ENCODE measurements at regions of chr14 and their contacts with region 1.

Region 1: GRCh38 chr14:22955702-22956569 is 954 bp downstream of the HAUS4 start:
- H3K4me3 ChIP-seq: peak overlapping the region; percentile 75
- H3K27ac ChIP-seq: peak overlapping the region; percentile 76; the same call in 1 of the 2 replicates
- H3K4me1 ChIP-seq: no peaks in the 10 kb centered on the region
- CTCF ChIP-seq: no peak

Region 2: DNA sequence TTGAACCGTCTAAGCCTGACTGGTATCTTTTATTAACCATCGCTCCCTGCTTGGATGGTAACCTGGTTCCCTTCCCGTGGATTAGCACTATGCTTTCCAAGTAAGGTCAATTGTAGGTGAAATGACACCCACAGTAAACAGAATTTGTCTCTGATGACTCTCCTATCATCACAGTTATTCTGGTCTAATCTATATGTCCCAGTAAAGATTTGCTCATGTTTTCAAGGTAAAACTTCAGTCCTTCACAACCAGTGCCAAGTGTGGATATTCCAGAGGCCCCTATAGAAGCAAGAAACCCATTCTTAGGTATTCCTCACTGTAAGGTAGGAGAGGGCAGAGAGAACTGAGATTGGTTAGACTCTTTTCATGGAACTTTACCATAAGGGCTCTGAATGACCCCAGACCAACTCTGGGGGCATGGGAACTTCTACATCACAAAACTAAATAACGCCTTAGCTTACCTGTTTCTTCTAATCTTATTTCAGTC is 10.9 kb after region 1 on chr14:
- CTCF ChIA-PET with region 1: interaction called, 43 read pairs
- POLR2A ChIA-PET with region 1: interaction called, 17 read pairs
- H3K4me3 ChIP-seq: no peak overlapping the region
- H3K27ac ChIP-seq: no peak overlapping the region
- H3K4me1 ChIP-seq: peaks cover 5% of the 10 kb centered on the region; the same call in 1 of the 2 replicates
- CTCF ChIP-seq: no peak

Region 3: DNA sequence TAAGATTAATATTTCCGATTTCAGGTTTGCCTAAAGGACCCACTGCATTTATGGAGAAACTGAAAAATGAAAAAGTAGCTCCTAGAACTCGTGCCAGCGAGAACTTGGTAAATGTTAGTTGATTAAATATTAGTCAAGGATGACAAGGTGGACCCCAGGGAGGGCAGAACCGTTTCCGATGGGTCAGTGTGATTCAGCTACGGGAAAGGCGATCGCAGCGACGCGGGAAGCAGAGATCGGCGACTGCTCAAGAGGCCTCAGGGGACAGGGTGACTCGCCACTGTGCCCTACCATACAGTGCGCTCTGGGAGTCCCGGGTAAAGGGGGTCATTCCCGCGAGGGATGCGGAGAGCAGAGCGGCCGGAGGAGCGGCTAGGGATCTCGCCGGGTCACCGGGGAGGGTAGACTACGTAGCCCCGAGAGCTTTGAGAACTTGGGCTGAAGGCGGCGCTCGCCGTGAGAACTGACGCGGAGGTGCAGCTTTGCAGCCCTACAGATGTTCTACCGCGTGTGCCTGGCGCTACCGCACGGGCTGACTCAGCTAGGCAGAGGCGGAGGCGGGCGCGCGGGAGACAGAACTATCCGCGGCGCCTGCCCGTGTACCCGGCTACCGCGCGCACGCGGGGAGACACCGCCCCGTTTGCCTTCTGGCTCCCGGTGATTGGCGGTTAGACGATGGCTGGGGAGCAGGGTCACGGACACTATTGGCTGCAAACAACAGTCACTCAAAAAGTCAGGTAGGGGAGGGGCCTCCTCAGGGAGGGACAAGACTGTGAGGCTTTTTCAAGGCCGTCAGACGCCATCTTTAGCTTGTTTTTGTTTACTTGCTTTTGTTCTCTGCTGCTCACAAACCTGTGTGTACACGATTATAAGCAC is 50.8 kb after region 1 on chr14:
- CTCF ChIA-PET with region 1: no interaction called
- POLR2A ChIA-PET with region 1: interaction called, 12 read pairs
- H3K4me3 ChIP-seq: peak overlapping the region; percentile 52
- H3K27ac ChIP-seq: peak overlapping the region; percentile 91
- H3K4me1 ChIP-seq: peaks cover 8% of the 10 kb centered on the region; the same call in 1 of the 2 replicates
- CTCF ChIP-seq: peak; percentile 85